Sigmoid colon (tissue), 7 donors: ENCODE measurements at regions of chr1 and their contacts with region 1.

Region 1: GRCh38 chr1:52002038-52002917 is 11.8 kb upstream of the RAB3B start:
- DNase-seq: no peak
- H3K4me3 ChIP-seq: no peak overlapping the region
- H3K27ac ChIP-seq: no peak overlapping the region
- H3K4me1 ChIP-seq: no peaks in the 10 kb centered on the region
- H3K27me3 ChIP-seq: no peaks in the 10 kb centered on the region
- CTCF ChIP-seq: peak; percentile 55 to 88 (median 86)
- EP300 ChIP-seq: no peak
- POLR2A ChIP-seq: no peak

Region 2: DNA sequence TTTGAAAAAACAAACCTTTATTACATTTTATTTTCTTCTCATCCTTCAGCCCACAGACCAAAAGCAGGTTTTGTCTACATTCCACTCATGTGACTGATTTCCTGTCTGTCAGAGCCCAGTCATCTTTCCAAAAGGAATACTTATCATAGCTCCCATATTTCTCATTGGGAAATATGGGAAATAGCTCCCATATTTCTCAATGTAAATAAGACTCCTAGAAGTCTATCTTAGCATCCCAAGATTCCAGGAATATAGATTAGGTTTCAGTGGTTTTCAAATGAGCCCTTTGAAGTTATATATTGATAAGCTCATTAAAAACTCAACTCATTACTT is 104.6 kb before region 1 on chr1:
- intact Hi-C with region 1: loop called (anchors 1 kb)
- DNase-seq: no peak
- H3K4me3 ChIP-seq: no peak overlapping the region
- H3K27ac ChIP-seq: no peak overlapping the region
- H3K4me1 ChIP-seq: peaks cover 0 to 5% (median 0%) of the 10 kb centered on the region in 4 donors
- H3K27me3 ChIP-seq: peaks cover 0 to 22% (median 5%) of the 10 kb centered on the region in 3 donors
- CTCF ChIP-seq: no peak
- EP300 ChIP-seq: no peak
- POLR2A ChIP-seq: no peak